Psoas muscle (tissue), 8 donors: ENCODE measurements at regions of chr7 and their contacts with region 1.

Region 1: DNA sequence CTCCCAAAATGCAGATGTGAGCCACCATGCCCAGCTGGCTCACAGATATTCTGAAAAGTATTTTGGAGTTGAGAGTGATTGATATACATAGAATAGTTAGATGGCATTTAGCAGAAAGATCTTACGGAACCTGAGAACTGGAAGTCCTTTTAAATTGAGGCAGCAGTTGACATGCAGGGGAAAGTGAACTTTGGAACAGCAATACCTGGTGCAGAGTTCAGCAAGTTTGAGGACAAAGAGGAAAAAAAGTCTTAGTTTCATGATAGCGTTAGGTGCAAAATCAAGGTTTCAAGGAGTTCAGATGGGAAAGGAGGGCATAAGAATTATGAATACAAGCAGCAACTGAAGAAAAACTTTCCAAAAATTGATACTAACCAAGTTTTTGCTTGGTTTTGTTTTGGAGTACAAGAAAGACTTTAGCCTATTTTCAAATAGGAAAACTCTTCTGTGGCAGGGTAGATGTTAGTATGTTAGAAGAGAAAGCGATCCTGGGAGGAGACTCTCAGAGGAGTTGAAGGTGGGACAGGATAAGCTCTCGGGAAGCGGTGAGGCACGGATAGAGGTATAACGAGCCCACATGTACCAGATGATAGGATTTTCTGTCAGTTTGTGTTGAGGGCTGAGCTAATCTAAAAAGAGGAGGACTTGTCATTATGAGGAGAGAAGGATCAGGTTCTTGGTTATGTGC is 28.0 kb upstream of the STMP1 start:
- DNase-seq: no peak
- ATAC-seq: no peak
- H3K4me3 ChIP-seq: no peak overlapping the region
- H3K27ac ChIP-seq: no peak overlapping the region
- H3K4me1 ChIP-seq: no peaks in the 10 kb centered on the region
- H3K27me3 ChIP-seq: no peaks in the 10 kb centered on the region
- CTCF ChIP-seq: no peak

Region 2: GRCh38 chr7:135575296-135575695 is 59.0 kb before region 1 on chr7:
- intact Hi-C with region 1: loop called in 1 of 2 experiments (anchors 10 kb)
- DNase-seq: no peak
- ATAC-seq: no peak
- H3K4me3 ChIP-seq: no peak overlapping the region
- H3K27ac ChIP-seq: no peak overlapping the region
- H3K4me1 ChIP-seq: no peaks in the 10 kb centered on the region
- H3K27me3 ChIP-seq: no peaks in the 10 kb centered on the region
- CTCF ChIP-seq: no peak

Region 3: DNA sequence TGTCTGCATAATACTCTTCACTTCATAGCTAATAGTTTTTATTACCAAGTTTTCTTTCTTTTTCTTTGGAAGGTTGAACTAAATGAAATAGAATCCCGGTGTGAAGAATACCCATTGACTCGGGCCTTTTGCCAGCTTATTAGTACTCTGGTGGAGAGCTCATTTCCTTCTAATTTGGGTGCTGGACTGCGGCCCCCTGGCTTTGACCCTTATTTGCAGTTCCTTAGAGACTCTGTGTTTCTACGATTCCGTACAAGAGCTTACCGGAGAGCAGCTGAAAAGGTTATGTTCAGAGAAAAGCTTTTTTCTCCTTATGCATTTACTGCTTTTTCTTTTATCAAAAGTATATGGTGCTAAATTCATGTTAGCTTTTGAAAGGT is 36.4 kb before region 1 on chr7:
- intact Hi-C with region 1: loop called in 1 of 2 experiments (anchors 5 kb)
- DNase-seq: no peak
- ATAC-seq: no peak
- H3K4me3 ChIP-seq: no peak overlapping the region
- H3K27ac ChIP-seq: no peak overlapping the region
- H3K4me1 ChIP-seq: no peaks in the 10 kb centered on the region
- H3K27me3 ChIP-seq: no peaks in the 10 kb centered on the region
- CTCF ChIP-seq: no peak

Region 4: DNA sequence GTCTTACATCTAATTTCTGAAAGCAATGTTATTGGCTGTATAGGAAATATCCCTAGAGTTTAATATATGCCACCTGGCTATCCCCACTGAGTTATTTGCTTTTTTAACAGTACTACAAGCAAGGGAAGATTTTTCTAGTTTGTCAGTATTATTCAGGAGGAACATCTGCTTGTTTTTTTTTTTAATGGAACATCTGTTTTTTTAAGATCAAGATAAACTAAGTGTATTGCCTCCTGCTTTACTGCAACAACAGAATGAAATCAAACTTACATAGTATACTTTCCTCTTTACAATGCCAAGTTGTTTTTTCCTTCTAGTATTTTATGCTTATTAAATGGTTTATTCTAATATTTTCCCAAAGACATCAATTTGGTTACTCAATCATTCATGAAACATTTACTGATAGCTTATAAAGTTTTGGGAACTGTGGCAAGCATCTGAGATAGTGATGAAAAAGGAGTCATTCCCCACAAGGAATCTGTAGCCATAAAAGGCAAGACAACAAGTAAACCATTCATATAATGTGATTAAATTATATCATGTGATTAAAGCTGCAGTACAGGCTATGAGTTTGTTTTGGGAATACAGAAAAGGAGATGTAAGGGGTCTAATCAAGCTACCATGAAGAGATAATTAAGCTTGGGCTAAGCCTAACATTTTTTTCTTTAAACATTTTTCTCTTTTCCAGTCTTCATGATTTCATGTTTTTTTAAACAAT is 325.5 kb after region 1 on chr7:
- intact Hi-C with region 1: no loop called
- DNase-seq: no peak
- ATAC-seq: no peak
- H3K4me3 ChIP-seq: no peak overlapping the region
- H3K27ac ChIP-seq: no peak overlapping the region
- H3K4me1 ChIP-seq: peaks cover 32% of the 10 kb centered on the region
- H3K27me3 ChIP-seq: no peaks in the 10 kb centered on the region
- CTCF ChIP-seq: no peak

Region 5: DNA sequence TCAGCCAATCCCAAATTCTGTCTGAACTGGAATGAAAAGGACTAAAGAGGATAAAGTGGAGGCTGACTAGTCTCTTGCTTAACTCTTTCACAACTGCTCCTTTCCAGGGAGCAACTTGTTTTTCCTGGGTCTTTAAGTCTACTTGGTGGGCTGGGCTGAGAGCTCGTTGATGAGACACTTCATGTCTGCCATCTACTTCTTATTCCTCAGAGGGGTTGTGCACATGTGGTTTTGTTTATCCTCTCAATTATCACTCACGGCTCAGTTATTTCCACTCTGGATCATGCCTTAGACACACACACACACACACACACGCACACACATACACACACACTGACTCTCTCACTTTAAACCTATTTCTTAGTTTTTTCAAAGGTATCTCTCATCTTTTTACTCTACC is 641.5 kb after region 1 on chr7:
- intact Hi-C with region 1: no loop called
- DNase-seq: no peak
- ATAC-seq: no peak
- H3K4me3 ChIP-seq: no peak overlapping the region
- H3K27ac ChIP-seq: no peak overlapping the region
- H3K4me1 ChIP-seq: no peaks in the 10 kb centered on the region
- H3K27me3 ChIP-seq: no peaks in the 10 kb centered on the region
- CTCF ChIP-seq: no peak